ENCODE measurements at regions of chr1 and their contacts with region 1.

Region 1: DNA sequence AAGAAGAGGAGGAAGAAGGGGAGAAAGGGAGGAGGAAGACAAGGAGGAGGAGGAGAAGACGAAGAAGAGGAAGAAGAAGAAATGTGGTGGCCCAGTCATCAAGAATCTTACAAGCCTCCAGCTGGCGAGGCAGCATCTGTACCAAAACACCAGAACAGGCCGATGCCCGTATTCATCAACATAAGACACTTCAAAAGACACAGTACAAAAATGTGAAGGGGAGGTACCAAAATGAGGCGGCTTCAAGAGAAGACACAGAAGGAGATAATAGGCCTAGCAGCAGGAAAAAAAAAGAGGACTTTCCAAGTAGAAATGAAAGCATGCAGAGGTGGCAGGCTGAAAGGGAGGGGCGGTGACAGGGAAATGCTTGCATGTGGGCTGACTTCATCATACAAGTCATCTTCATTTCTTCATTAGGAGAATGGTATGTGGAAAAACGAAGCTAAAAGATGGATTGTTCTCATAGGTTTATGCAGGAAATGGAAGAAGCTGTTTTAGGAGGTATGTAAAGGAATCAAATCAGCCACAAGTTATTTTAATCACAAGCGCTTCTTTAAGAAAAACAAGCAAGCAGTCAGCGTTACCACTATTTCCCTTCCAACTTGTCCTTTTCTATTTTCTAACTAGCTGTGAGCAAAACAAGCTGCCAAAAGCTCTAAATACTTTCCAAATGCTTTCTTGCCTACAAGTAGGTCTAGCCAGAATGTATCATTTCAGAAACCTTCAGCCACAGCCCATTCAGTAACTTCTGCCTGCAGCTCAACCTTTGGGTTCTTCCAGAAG is 192.3 kb downstream of the SLC45A1 start:
- DNase-seq: peak; percentile 60
- ATAC-seq: peak; percentile 65
- H3K4me3 ChIP-seq: peak overlapping the region in 3 of 5 experiments; percentile 3 to 18 (median 7)
- H3K4me3 Mint-ChIP-seq: peak overlapping the region; percentile 80
- H3K27ac ChIP-seq: peak overlapping the region; percentile 54 to 77
- H3K27ac Mint-ChIP-seq: peak overlapping the region; percentile 87
- H3K4me1 ChIP-seq: peaks cover 30 to 31% of the 10 kb centered on the region in 2 donors
- H3K4me1 Mint-ChIP-seq: peaks cover 35% of the 10 kb centered on the region
- H3K27me3 ChIP-seq: no peaks in the 10 kb centered on the region
- H3K27me3 Mint-ChIP-seq: no peaks in the 10 kb centered on the region
- CTCF ChIP-seq: no peak

Region 2: DNA sequence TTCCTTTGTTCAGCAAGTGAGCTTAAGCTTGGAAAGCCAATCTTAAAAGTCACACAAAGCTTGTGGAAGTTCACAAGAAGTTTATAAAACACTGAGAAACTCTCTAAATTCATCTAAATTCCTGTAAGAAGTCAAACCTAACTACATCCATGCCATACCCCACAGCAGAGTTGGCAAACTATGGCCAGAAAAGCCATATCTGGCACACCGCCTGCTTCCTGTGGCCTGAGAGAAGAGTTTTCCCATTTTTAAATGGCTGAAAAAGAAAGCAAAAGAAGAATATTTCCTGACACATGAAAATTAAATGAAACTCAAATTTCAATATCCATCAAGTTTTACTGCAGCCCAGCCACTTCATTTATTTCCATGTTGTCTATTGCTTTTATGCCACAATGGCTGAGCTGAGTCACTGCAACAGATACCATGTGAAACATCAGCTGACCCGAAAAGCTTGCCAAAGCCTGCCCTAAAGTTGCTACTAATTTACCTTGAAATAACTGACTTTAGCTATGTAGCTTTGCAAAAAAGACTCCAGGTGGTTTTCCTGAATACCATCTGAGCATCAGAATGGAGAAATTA is 44.8 kb after region 1 on chr1:
- CTCF ChIA-PET with region 1: no interaction called
- POLR2A ChIA-PET with region 1: no interaction called
- intact Hi-C with region 1: loop called (anchors 5 kb)
- DNase-seq: no peak
- ATAC-seq: no peak
- H3K4me3 ChIP-seq: no peak overlapping the region
- H3K4me3 Mint-ChIP-seq: no peak overlapping the region
- H3K27ac ChIP-seq: no peak overlapping the region
- H3K27ac Mint-ChIP-seq: peak overlapping the region; percentile 16
- H3K4me1 ChIP-seq: peaks cover 0 to under 1% of the 10 kb centered on the region in 2 donors
- H3K4me1 Mint-ChIP-seq: peaks cover 17% of the 10 kb centered on the region
- H3K27me3 ChIP-seq: no peaks in the 10 kb centered on the region
- H3K27me3 Mint-ChIP-seq: no peaks in the 10 kb centered on the region
- CTCF ChIP-seq: no peak

Measured in B cell (primary cell).